Panc1 (cell line): ENCODE measurements at regions of chr22 and their contacts with region 1.

Region 1: GRCh38 chr22:31496007-31496734 is at the start of gene SFI1:
- DNase-seq: peak; percentile 35
- ATAC-seq: peak; percentile 98
- H3K4me3 ChIP-seq: peak within 1 kb of the TSS; percentile 77 to 89
- H3K27ac ChIP-seq: peak within 1 kb of the TSS; percentile 84
- H3K4me1 ChIP-seq: peaks cover 1% of the 10 kb centered on the region; the same call in 1 of the 2 replicates
- H3K27me3 ChIP-seq: no peaks in the 10 kb centered on the region
- CTCF ChIP-seq: no peak; the same call in 1 of the 2 replicates
- total RNA-seq, gene SFI1: 29.9 TPM

Region 2: DNA sequence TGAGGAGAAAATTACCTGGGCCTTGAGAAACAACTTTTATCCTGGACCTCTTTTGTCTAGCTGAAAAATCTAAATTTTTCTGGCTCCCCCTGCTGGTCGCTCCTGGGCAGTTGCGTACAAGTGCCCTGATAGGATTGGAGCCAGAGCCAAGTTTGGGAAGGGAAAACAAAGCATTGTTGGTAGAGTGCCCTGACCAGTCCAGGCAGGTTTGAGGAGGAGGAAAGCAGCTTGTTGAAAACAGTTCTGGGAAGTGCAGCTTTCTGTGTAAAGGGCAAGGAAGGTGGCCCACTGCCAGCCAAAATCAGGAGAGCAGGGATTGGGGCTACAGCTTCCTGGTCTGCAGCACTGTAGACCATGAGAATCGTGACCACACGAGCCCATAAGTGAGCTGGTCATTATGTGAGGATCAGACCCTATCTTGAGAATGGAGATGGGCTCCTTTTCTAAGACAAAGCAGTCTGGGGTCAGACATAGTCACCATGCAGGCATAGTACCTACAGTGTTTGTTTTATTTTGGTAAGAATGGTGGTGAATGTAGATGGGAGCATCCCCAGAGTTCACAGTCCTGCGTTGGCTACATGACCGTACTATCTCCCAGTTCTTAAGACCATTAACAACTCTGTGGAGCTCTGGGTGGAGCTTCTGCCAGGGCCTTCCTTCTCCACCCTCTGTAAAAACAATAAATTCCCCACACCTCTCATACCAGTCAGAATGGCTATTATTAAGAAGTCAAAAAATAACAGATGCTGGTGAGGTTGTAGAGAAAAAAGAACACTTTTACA is 182.6 kb before region 1 on chr22:
- CTCF ChIA-PET with region 1: no interaction called
- POLR2A ChIA-PET with region 1: interaction called, 17 read pairs
- in situ Hi-C with region 1: no loop called
- intact Hi-C with region 1: no loop called
- DNase-seq: no peak
- ATAC-seq: peak; percentile 83
- H3K4me3 ChIP-seq: no peak overlapping the region
- H3K27ac ChIP-seq: no peak overlapping the region
- H3K4me1 ChIP-seq: no peaks in the 10 kb centered on the region
- H3K27me3 ChIP-seq: no peaks in the 10 kb centered on the region
- CTCF ChIP-seq: peak; percentile 89